GM18951 (cell line): ENCODE measurements at regions of chr12 and their contacts with region 1.

Region 1: GRCh38 chr12:94149119-94149780 is 873 bp downstream of the PLXNC1 start:
- POLR2A ChIP-seq: no peak

Region 2: DNA sequence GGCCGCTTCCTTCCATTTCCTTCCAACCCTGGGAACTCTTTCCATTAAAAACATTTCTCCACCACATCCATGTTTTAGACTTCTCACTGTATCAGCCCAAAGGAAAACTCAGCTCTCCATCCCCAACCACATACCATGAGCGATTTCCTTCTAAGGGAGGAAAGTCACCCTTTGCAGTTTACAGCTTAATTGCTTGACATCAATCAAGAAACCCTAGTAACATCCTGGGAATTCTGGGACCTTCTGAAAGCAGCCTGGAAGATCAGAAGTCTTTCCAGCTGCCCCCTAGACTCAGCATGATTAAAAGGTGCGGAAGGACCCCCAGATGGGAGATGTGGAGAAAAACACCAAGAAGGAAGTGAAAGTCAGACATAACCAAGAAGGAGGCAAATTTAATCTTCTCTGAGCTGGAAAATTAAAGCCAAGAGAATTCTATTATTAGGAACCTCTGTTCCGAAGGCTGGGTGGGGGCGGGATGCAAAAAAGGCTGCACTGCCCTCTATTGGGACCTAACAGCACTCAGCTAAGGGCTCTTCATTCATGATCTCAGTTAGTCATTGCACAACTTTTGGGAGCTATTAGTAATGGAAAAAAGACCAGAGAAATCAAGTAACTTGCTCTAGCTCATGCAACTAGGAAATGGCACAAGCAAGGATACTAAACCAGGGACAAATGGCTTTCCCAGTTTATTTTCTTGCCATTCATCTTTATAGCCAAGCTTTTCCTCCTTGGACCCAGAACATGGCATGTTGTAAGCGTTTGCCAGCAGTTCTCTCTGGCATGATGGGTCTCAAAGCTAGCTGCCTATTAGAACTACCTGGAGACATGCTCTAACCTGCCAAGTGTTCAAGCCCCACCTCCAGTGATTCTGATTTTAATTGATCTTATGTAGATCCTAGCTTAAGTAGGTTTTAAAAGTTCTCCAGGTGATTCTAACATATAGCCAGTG is 74.0 kb before region 1 on chr12:
- in situ Hi-C with region 1: no loop called
- POLR2A ChIP-seq: no peak

Region 3: GRCh38 chr12:94123127-94123526 is 26.1 kb before region 1 on chr12:
- in situ Hi-C with region 1: no loop called
- POLR2A ChIP-seq: no peak

Region 4: GRCh38 chr12:94434171-94434570 is 284.9 kb after region 1 on chr12:
- in situ Hi-C with region 1: loop called (anchors 5 kb)
- POLR2A ChIP-seq: no peak

Region 5: DNA sequence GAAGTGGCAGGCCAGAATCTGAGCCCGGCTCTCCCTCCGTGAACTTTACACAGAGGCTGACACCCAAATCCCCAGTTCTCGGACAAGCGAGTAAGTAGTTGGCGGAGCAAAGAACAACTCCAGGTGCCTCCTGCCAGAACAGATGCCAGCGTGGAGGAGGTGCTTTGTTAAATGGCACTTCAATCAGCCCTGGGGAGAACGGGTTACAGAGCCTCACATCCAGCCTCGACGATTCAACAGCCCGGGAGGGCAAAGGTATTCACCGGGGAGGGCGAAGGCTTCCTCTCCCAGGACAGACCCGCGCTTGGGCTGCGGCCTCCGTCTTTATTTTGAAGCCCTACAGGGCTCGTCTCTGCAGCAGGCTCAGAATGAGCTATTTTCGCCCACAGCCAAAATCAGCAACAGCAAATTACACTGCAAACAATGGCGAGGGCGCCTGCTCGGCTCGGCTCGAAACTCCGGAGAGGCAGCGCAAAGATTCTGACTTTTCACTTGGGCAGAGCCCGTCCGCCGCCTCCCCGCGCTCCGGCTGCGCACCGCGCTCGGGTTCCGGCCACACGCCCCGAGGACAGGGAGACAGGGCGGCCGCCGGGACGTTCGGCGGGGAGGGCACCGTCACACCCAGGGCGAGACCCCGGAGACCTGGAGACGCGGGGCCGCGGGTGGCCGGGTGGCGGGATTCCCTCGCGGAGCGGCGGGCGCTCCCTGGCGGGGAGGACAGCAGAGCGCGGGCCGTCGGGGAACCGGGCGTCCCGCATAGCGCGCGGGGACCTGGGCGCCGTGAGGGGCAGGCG is 500.3 kb after region 1 on chr12:
- in situ Hi-C with region 1: no loop called
- POLR2A ChIP-seq: no peak